Activated naive CD8-positive, alpha-beta T cell treated with anti-CD3 and anti-CD28 coated beads, Interleukin-2, amount 10 ng/mL, durations not matched to agents 7 days and 5 days (primary cell): ENCODE measurements at regions of chr16 and their contacts with region 1.

Region 1: DNA sequence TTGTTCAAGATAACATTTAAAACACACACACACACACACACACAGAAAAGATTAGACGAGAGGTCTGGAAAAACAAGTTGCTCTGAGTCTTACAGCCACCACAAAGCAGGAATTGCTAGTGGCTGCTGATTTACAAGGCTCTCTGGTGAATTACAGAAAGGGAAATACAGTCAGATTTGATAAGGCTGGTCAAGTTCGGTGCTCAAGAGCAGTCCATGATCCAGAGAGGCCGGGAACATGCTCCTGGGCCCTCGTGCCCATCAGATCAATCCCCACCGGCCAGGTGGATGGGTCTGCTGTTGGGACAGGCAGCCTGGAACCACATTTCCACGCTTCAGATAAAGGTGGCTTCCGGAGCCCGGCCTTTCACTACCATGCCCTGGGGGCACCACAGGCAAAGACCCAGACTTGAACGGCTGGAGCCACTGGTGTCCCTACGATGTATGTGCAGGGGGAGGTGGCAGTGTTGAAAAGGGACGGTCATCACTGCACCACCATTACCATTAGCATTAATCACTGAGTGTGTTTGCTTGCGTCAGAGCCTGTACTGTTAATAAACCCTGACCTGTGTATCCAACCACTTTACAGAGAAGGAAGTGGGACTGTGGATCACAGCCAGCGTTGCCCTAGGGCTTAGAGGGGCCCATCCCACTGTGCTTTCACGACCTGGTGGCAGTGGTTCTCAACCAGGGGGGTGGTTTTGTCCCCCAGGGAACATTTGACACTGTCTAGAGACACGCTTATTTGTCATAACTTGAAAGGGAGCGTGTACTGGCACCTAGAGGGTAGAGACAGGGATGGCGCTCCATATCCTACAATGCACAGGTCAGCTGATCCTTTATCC is 95.1 kb downstream of the XYLT1 start:
- DNase-seq: no peak
- ATAC-seq: no peak
- H3K4me3 Mint-ChIP-seq: no peak overlapping the region
- H3K27ac Mint-ChIP-seq: no peak overlapping the region
- H3K4me1 Mint-ChIP-seq: peaks cover 49% of the 10 kb centered on the region
- H3K27me3 Mint-ChIP-seq: no peaks in the 10 kb centered on the region

Region 2: GRCh38 chr16:17467923-17468540 is 92.3 kb after region 1 on chr16:
- POLR2A ChIA-PET with region 1: interaction called, 10 read pairs
- DNase-seq: peak; percentile 50
- ATAC-seq: peak; percentile 48
- H3K4me3 Mint-ChIP-seq: peak overlapping the region; percentile 93
- H3K27ac Mint-ChIP-seq: peak overlapping the region; percentile 32
- H3K4me1 Mint-ChIP-seq: peaks cover 40% of the 10 kb centered on the region
- H3K27me3 Mint-ChIP-seq: no peaks in the 10 kb centered on the region